Activated T-helper 1 cell treated with anti-CD3 and anti-CD28 coated beads, Interleukin-12 subunit alpha, Interleukin-12 subunit beta, Interleukin-2, Interleukin-4 antibody, amounts not matched to agents 30 ng/mL and 10 ng/mL and 1 ng/mL, durations not matched to agents 14 hours and 24 hours and 36 hours (primary cell): ENCODE measurements at regions of chr6 and their contacts with region 1.

Region 1: GRCh38 chr6:34236131-34236996 is at the start of gene HMGA1:
- DNase-seq: peak; percentile 83
- H3K4me3 Mint-ChIP-seq: peak within 1 kb of the TSS; percentile 86
- H3K27ac Mint-ChIP-seq: peak within 1 kb of the TSS; percentile 92
- H3K4me1 Mint-ChIP-seq: peaks cover 43% of the 10 kb centered on the region
- H3K27me3 Mint-ChIP-seq: no peaks in the 10 kb centered on the region
- total RNA-seq, gene HMGA1: 415 and 438 TPM in 2 replicates

Region 2: GRCh38 chr6:34132486-34133185 is 103.7 kb before region 1 on chr6:
- intact Hi-C with region 1: no loop called
- DNase-seq: peak; percentile 26
- H3K4me3 Mint-ChIP-seq: no peak overlapping the region
- H3K27ac Mint-ChIP-seq: no peak overlapping the region
- H3K4me1 Mint-ChIP-seq: no peaks in the 10 kb centered on the region
- H3K27me3 Mint-ChIP-seq: peaks cover 30% of the 10 kb centered on the region

Region 3: GRCh38 chr6:34182751-34183531 is 53.4 kb before region 1 on chr6:
- intact Hi-C with region 1: loop called (anchors 1 kb)
- DNase-seq: peak; percentile 48
- H3K4me3 Mint-ChIP-seq: peak overlapping the region; percentile 47
- H3K27ac Mint-ChIP-seq: peak overlapping the region; percentile 89
- H3K4me1 Mint-ChIP-seq: peaks cover 13% of the 10 kb centered on the region
- H3K27me3 Mint-ChIP-seq: peaks cover 2% of the 10 kb centered on the region

Region 4: DNA sequence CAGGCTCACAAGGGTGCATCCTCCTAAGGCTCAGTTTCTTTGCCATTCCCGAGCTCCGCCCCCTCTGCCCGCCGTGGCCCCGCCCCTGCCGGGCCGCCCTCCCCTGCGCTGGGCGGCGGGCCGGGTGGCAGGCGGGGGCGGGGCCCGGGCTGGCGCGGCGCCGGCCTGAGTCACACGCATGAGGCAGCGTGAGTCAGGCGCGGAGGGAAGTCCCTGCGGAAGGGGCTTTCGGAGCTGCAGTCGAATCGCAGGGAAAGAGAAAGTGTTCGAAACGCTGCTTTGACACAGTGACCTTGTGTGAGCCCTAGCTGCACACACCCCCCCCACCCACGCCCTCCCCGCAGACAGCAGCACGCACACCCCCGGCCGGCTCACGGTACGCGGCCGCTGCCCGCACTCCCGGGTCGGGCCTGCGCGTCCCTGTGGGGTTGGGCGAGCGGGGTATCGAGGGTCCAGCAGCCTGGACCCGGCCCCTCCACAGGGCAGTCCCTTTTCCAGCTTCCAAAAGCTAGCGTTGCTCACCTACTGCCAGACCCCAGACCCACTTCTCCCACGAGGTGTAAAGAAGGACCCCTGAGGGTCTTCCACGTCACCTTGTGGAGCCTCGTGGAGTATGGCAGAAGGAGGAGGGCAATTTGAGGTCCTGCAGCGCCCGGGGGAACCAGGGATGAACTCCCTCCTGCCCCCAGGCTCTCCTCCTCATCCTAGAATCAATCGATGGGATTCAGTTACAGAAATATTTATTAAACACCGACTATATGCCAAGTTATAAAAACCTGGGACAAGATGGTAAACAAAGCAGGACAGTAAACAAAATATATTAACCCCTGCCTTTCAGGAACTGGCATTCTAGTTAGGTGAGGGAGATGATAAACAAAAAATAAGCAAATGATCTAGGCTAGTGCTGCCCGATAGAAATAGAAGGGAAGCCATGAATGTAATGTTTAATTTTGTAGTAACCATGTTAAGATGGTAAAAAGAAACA is 12.1 kb before region 1 on chr6:
- intact Hi-C with region 1: loop called (anchors 1 kb)
- DNase-seq: peak; percentile 91
- H3K4me3 Mint-ChIP-seq: peak overlapping the region; percentile 64
- H3K27ac Mint-ChIP-seq: peak overlapping the region; percentile 76
- H3K4me1 Mint-ChIP-seq: peaks cover 28% of the 10 kb centered on the region
- H3K27me3 Mint-ChIP-seq: peaks cover 7% of the 10 kb centered on the region